MCF 10A (cell line): ENCODE measurements at regions of chr17 and their contacts with region 1.

Region 1: DNA sequence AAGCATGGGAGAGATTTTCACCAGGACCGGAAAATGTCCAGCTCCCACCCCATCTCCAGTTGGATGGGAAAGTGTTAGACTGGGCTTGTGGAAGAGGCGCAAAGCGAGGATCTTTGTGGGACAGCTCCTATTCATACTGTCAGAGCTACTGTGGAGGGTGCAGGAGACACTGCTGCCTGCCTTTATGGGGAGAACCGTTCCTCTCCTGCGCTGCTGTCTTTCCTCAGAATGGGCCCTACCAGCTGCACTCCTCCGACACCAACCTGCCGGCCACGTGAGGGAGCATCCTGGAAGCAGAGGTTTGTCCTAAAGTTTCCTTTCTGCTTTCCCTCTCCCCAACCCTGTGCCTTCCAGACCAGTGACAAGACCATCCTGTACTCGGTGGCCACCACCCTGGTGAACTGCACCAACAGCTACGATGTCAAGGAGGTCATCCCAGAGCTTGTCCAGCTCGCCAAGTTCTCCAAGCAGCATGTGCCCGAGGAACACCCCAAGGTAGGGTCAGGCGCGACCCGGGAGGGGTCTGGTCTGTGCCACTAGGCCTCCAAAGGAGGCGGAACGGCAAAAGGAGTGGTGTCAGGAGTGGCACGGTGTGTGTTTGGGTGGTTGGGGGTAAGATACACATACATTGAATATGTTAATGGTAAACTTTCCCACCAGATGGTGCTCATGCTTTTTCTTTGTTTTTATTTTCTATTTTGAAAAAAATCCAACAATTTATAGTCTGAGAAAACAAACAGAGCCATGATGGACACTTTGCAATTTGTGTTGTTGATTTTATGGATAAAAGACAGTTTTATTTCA is 23.0 kb downstream of the SLC35G3 start:
- DNase-seq: peak; percentile 30
- H3K4me3 Mint-ChIP-seq: no peak overlapping the region
- H3K27ac Mint-ChIP-seq: no peak overlapping the region
- H3K4me1 Mint-ChIP-seq: peaks cover 5% of the 10 kb centered on the region
- H3K27me3 Mint-ChIP-seq: peaks cover 15% of the 10 kb centered on the region
- CTCF ChIP-seq: peak; percentile 26

Region 2: DNA sequence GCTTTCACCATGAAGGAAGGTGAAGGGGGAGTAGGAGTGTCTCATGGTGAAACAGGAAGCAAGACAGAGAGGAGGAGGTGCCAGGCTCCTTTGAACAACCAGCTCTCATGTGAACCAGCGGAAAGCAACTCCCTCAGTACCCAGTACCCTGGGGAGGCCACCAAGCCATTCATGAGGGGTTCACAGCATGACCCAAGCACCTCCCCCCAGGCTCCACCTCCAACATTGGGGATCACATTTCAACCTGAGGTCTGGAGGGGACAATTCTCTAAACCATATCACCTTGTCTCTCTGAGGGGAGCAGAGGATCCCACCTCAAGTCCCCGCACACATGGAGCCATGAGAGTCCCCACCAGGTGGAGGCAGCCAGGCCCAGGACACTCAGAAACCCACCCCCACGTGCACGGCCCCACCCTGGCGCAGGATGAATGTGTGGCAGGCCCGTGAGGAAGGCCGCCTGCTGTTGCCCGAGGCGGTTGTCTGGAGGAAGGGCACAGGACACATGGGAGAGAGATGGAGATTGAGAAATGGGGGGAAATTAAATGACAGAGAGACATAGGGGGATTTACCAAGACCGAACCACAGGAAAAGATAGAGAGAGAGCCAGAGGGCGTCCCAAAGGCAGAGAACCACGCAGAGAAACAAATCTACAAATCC is 505.9 kb before region 1 on chr17:
- CTCF ChIA-PET with region 1: no interaction called
- POLR2A ChIA-PET with region 1: no interaction called
- intact Hi-C with region 1: no loop called
- DNase-seq: no peak
- H3K4me3 Mint-ChIP-seq: no peak overlapping the region
- H3K27ac Mint-ChIP-seq: no peak overlapping the region
- H3K4me1 Mint-ChIP-seq: no peaks in the 10 kb centered on the region
- H3K27me3 Mint-ChIP-seq: no peaks in the 10 kb centered on the region
- CTCF ChIP-seq: no peak

Region 3: DNA sequence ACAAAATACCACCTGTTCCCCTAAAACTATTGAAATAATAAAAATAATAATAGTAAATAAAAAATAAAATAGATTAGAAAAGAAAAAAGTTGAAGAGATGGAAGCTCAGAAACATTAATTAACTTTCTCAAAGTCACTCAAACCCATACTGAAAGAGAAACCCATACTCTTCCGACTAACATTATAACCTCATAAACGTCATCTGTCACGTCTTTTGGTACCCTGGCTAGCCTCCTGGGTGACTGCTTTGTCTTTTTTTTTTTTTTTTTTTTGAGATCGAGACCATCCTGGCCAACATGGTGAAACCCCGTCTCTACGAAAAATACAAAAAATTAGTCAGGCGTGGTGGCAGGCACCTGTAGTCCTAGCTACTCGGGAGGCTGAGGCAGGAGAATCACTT is 358.7 kb after region 1 on chr17:
- CTCF ChIA-PET with region 1: interaction called, 33 read pairs
- POLR2A ChIA-PET with region 1: no interaction called
- intact Hi-C with region 1: loop called (anchors 1 kb)
- DNase-seq: no peak
- H3K4me3 Mint-ChIP-seq: no peak overlapping the region
- H3K27ac Mint-ChIP-seq: no peak overlapping the region
- H3K4me1 Mint-ChIP-seq: peaks cover 6% of the 10 kb centered on the region
- H3K27me3 Mint-ChIP-seq: peaks cover 52% of the 10 kb centered on the region
- CTCF ChIP-seq: no peak

Region 4: DNA sequence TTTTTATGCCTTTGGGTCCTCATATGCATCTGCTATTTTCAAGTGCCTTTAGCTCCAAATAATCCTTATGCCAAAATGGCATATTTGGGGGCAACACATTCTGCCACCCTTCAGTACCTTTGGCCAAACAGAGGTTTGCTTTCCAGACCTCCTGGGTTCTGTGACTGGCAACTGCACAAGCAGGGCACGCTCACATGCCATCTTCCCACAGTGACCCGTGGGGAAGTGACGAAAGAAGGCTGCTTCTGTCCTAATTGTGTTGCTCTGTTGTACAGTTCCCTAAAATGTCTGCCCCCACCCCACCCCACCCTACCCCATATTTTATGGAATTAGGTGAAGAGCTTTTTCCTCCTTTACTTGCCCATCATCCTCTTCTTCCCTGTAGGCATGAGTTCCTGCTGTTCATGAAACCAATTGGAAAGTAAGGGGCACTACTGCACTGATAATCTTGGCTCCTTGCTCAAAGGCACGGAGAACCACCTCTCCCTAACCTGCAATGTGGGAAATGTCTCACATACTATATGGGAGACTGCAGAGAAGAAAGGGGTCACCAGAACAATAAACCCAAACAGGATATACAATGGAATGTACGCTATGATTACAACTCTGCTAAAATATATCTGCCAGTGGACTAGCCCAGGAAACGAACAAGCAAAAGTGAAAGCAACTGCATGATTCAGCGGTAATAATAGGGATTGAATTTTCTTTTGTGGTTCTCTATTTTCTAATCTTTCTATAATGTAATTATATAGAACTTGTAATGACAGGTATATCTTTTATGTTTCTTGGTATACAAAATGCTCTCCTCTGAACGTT is 369.6 kb after region 1 on chr17:
- CTCF ChIA-PET with region 1: interaction called, 24 read pairs
- POLR2A ChIA-PET with region 1: no interaction called
- intact Hi-C with region 1: no loop called
- DNase-seq: peak; percentile 27
- H3K4me3 Mint-ChIP-seq: peak overlapping the region; percentile 43
- H3K27ac Mint-ChIP-seq: no peak overlapping the region
- H3K4me1 Mint-ChIP-seq: no peaks in the 10 kb centered on the region
- H3K27me3 Mint-ChIP-seq: peaks cover 11% of the 10 kb centered on the region
- CTCF ChIP-seq: no peak